ENCODE measurements at regions of chr19 and their contacts with region 1.

Region 1: GRCh38 chr19:5149932-5150901 is 181.3 kb downstream of the KDM4B start:
- DNase-seq: no peak
- H3K4me3 ChIP-seq: no peak overlapping the region
- H3K27ac ChIP-seq: no peak overlapping the region
- H3K4me1 ChIP-seq: peaks cover 16% of the 10 kb centered on the region
- H3K27me3 ChIP-seq: no peaks in the 10 kb centered on the region
- CTCF ChIP-seq: no peak

Region 2: GRCh38 chr19:5138606-5139582 is 11.3 kb before region 1 on chr19:
- CTCF ChIA-PET with region 1: interaction called, 17 read pairs
- POLR2A ChIA-PET with region 1: no interaction called
- intact Hi-C with region 1: no loop called
- DNase-seq: peak; percentile 77
- H3K4me3 ChIP-seq: no peak overlapping the region
- H3K27ac ChIP-seq: peak overlapping the region; percentile 37
- H3K4me1 ChIP-seq: peaks cover 7% of the 10 kb centered on the region
- H3K27me3 ChIP-seq: no peaks in the 10 kb centered on the region
- CTCF ChIP-seq: 0 out of 2 replicates have a peak, but pooled peaks have one; percentile 13

Region 3: GRCh38 chr19:5172859-5173577 is 22.8 kb after region 1 on chr19:
- CTCF ChIA-PET with region 1: no interaction called
- POLR2A ChIA-PET with region 1: interaction called, 16 read pairs
- intact Hi-C with region 1: no loop called
- DNase-seq: peak; percentile 79
- H3K4me3 ChIP-seq: no peak overlapping the region
- H3K27ac ChIP-seq: peak overlapping the region; percentile 34
- H3K4me1 ChIP-seq: no peaks in the 10 kb centered on the region
- H3K27me3 ChIP-seq: no peaks in the 10 kb centered on the region
- CTCF ChIP-seq: no peak

Region 4: GRCh38 chr19:5186293-5187050 is 36.3 kb after region 1 on chr19:
- CTCF ChIA-PET with region 1: interaction called, 10 read pairs
- POLR2A ChIA-PET with region 1: no interaction called
- intact Hi-C with region 1: no loop called
- DNase-seq: peak; percentile 32
- H3K4me3 ChIP-seq: no peak overlapping the region
- H3K27ac ChIP-seq: no peak overlapping the region
- H3K4me1 ChIP-seq: peaks cover 4% of the 10 kb centered on the region
- H3K27me3 ChIP-seq: no peaks in the 10 kb centered on the region
- CTCF ChIP-seq: no peak

Region 5: DNA sequence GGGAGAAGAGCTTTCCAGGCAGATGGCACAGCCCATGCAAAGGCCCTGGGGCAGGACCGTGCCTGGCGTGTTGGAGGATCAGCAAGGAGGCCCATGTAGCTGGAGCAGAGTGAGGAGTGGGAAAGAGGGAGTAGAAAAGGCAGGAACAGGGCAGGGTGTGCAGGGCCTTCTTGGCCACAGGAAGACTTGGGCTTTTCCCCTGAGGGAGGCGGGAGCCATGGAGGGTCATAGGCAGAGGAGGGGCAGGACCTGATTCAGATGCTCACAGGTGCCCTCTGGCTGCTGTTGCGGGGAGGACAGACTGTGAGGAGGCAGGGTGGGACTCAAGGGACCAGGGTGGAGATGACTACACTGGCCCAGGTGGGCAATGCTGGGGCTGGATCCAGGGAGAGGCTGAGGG is 204.2 kb after region 1 on chr19:
- CTCF ChIA-PET with region 1: no interaction called
- POLR2A ChIA-PET with region 1: no interaction called
- intact Hi-C with region 1: no loop called
- DNase-seq: peak; percentile 48
- H3K4me3 ChIP-seq: no peak overlapping the region
- H3K27ac ChIP-seq: no peak overlapping the region
- H3K4me1 ChIP-seq: no peaks in the 10 kb centered on the region
- H3K27me3 ChIP-seq: no peaks in the 10 kb centered on the region
- CTCF ChIP-seq: peak; percentile 46